ENCODE measurements at regions of chr3 and their contacts with region 1.

Region 1: GRCh38 chr3:15629860-15630597 is 28.5 kb downstream of the BTD start:
- DNase-seq: peak; percentile 91
- H3K4me3 ChIP-seq: peak overlapping the region in 1 of 3 experiments; percentile 50
- H3K27ac ChIP-seq: peak overlapping the region; percentile 100
- H3K4me1 ChIP-seq: peaks cover 52% of the 10 kb centered on the region
- H3K27me3 ChIP-seq: no peaks in the 10 kb centered on the region
- CTCF ChIP-seq: peak; percentile 61 to 76
- POLR2A ChIP-seq: no peak

Region 2: GRCh38 chr3:15601397-15602145 is 28.5 kb before region 1 on chr3 and contains the starts of genes BTD and HACL1:
- CTCF ChIA-PET with region 1: interaction called, 6 read pairs
- POLR2A ChIA-PET with region 1: interaction called, 6 read pairs
- dilution Hi-C with region 1: no loop called
- intact Hi-C with region 1: loop called (anchors 1 kb)
- DNase-seq: peak; percentile 100
- H3K4me3 ChIP-seq: peak within 1 kb of the TSS; percentile 73 to 86 (median 74)
- H3K27ac ChIP-seq: peak within 1 kb of the TSS; percentile 61
- H3K4me1 ChIP-seq: peaks cover 16% of the 10 kb centered on the region
- H3K27me3 ChIP-seq: no peaks in the 10 kb centered on the region
- CTCF ChIP-seq: no peak
- POLR2A ChIP-seq: peak; percentile 94
- total RNA-seq, gene BTD: 18.7 and 20.3 TPM in 2 replicates
- total RNA-seq, gene HACL1: 27.4 and 29.9 TPM in 2 replicates

Region 3: GRCh38 chr3:15693355-15693754 is 63.3 kb after region 1 on chr3:
- CTCF ChIA-PET with region 1: interaction called, 5 read pairs
- POLR2A ChIA-PET with region 1: no interaction called
- dilution Hi-C with region 1: no loop called
- intact Hi-C with region 1: loop called (anchors 1 kb)
- DNase-seq: no peak
- H3K4me3 ChIP-seq: no peak overlapping the region
- H3K27ac ChIP-seq: no peak overlapping the region
- H3K4me1 ChIP-seq: no peaks in the 10 kb centered on the region
- H3K27me3 ChIP-seq: no peaks in the 10 kb centered on the region
- CTCF ChIP-seq: no peak
- POLR2A ChIP-seq: no peak

Region 4: GRCh38 chr3:15797642-15798303 is 167.7 kb after region 1 on chr3 and contains the start of gene ANKRD28:
- CTCF ChIA-PET with region 1: interaction called, 33 read pairs
- POLR2A ChIA-PET with region 1: interaction called, 5 read pairs
- dilution Hi-C with region 1: no loop called
- intact Hi-C with region 1: loop called (anchors 1 kb)
- DNase-seq: peak; percentile 95
- H3K4me3 ChIP-seq: peak within 1 kb of the TSS; percentile 26 to 100 (median 84)
- H3K27ac ChIP-seq: peak within 1 kb of the TSS; percentile 96
- H3K4me1 ChIP-seq: peaks cover 26% of the 10 kb centered on the region
- H3K27me3 ChIP-seq: no peaks in the 10 kb centered on the region
- CTCF ChIP-seq: peak in 1 of 2 donors; percentile 31
- POLR2A ChIP-seq: no peak
- total RNA-seq, gene ANKRD28: 82.2 and 97.3 TPM in 2 replicates

Region 5: DNA sequence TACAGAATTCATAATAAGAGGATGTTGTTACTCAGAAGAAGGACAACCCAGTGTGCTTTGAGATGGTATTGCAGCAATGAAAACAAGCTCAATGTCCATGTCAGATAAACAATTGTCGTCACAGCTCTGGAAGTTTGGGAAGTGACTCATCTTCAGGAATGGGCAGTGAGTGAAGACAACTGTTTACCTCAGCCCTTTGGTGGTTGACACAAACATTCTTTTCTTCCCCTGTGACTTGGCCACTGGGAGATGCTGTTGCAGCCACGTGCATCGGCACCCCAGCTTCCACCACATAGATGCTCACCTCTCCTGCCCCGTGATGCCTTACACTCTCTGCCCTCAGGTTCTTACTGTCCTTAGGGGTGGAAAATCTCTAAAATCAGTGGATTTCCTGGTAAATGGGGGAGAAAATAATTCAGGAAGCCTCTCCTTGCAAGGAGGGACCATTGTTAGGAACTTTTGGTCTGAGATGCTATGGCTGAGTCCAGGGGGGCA is 430.4 kb after region 1 on chr3:
- CTCF ChIA-PET with region 1: no interaction called
- POLR2A ChIA-PET with region 1: no interaction called
- dilution Hi-C with region 1: loop called (anchors 25 kb)
- intact Hi-C with region 1: no loop called
- DNase-seq: peak; percentile 82
- H3K4me3 ChIP-seq: no peak overlapping the region
- H3K27ac ChIP-seq: peak overlapping the region; percentile 97
- H3K4me1 ChIP-seq: peaks cover 57% of the 10 kb centered on the region
- H3K27me3 ChIP-seq: no peaks in the 10 kb centered on the region
- CTCF ChIP-seq: peak; percentile 4 to 45
- POLR2A ChIP-seq: peak; percentile 35

Region 6: DNA sequence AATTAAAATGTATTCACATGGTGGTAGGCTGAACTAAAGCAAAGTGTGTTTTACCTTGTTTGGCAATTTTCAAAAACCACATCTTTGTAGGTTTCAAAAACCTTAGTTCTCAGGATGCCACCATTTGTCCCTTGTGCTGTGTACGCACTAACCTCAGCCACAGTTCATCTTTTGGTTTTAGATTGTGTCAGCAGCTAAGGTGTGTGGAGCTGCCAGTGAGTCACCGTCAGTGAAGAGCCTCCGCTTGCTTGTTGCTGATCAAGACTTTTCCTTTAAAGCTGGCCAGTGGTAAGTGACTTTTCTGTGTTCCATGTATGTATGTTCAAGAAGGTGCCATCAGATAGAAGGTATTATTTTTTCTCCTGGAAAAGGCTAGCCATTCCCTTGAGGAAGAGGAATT is 656.1 kb after region 1 on chr3:
- CTCF ChIA-PET with region 1: no interaction called
- POLR2A ChIA-PET with region 1: no interaction called
- dilution Hi-C with region 1: no loop called
- intact Hi-C with region 1: no loop called
- DNase-seq: no peak
- H3K4me3 ChIP-seq: no peak overlapping the region
- H3K27ac ChIP-seq: no peak overlapping the region
- H3K4me1 ChIP-seq: peaks cover 2% of the 10 kb centered on the region
- H3K27me3 ChIP-seq: no peaks in the 10 kb centered on the region
- CTCF ChIP-seq: no peak
- POLR2A ChIP-seq: no peak